HEK293 (cell line): ENCODE measurements at regions of chr6 and their contacts with region 1.

Region 1: GRCh38 chr6:156780102-156780641 is 3.0 kb downstream of the ARID1B start:
- H3K4me3 ChIP-seq: peak overlapping the region; percentile 94
- H3K27ac ChIP-seq: peak overlapping the region; percentile 99
- H3K4me1 ChIP-seq: peaks cover 35% of the 10 kb centered on the region
- CTCF ChIP-seq: no peak

Region 2: GRCh38 chr6:156508923-156509322 is 271.2 kb before region 1 on chr6:
- CTCF ChIA-PET with region 1: no interaction called
- POLR2A ChIA-PET with region 1: no interaction called
- H3K4me3 ChIP-seq: no peak overlapping the region
- H3K27ac ChIP-seq: no peak overlapping the region
- H3K4me1 ChIP-seq: no peaks in the 10 kb centered on the region
- CTCF ChIP-seq: no peak

Region 3: GRCh38 chr6:156557251-156557910 is 222.8 kb before region 1 on chr6:
- CTCF ChIA-PET with region 1: no interaction called
- POLR2A ChIA-PET with region 1: no interaction called
- H3K4me3 ChIP-seq: no peak overlapping the region
- H3K27ac ChIP-seq: peak overlapping the region; percentile 4; the same call in 1 of the 2 replicates
- H3K4me1 ChIP-seq: no peaks in the 10 kb centered on the region
- CTCF ChIP-seq: no peak

Region 4: GRCh38 chr6:157021344-157021992 is 241.3 kb after region 1 on chr6:
- CTCF ChIA-PET with region 1: no interaction called
- POLR2A ChIA-PET with region 1: interaction called, 10 read pairs
- H3K4me3 ChIP-seq: peak overlapping the region; percentile 86
- H3K27ac ChIP-seq: peak overlapping the region; percentile 97
- H3K4me1 ChIP-seq: peaks cover 14% of the 10 kb centered on the region; the same call in 1 of the 2 replicates
- CTCF ChIP-seq: peak; percentile 75; the same call in 1 of the 2 replicates